ENCODE measurements at regions of chr6 and their contacts with region 1.

Region 1: DNA sequence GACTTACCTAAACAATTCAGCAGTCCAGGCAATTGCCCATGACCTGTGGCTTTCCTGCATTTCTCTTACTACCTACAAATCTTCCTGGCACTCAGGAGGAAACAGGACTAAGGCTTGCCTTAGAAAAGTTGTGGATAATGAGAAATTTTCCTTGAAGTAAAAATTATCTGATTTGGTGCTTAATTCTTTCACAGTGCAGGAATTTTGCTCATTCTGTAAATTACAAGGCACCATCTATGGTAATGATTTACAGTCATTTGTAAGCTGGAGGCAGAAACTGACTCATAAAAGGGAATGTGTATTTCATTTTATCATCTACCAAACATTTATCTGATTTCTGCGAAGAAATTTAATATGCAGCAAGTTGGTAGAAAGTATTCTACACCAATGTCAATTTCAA is 211.5 kb upstream of the FKBP1C start:
- DNase-seq: no peak
- ATAC-seq: no peak
- H3K4me3 ChIP-seq: no peak overlapping the region
- H3K27ac ChIP-seq: no peak overlapping the region
- H3K4me1 ChIP-seq: peaks cover 18% of the 10 kb centered on the region
- H3K27me3 ChIP-seq: no peaks in the 10 kb centered on the region
- CTCF ChIP-seq: no peak
- EP300 ChIP-seq: no peak
- POLR2A ChIP-seq: no peak
- RAD21 ChIP-seq: no peak

Region 2: GRCh38 chr6:64293298-64293697 is 1293.5 kb after region 1 on chr6:
- CTCF ChIA-PET with region 1: no interaction called
- POLR2A ChIA-PET with region 1: no interaction called
- in situ Hi-C with region 1: no loop called
- intact Hi-C with region 1: loop called (anchors 5 kb)
- DNase-seq: no peak
- ATAC-seq: no peak
- H3K4me3 ChIP-seq: no peak overlapping the region
- H3K27ac ChIP-seq: no peak overlapping the region
- H3K4me1 ChIP-seq: no peaks in the 10 kb centered on the region
- H3K27me3 ChIP-seq: no peaks in the 10 kb centered on the region
- CTCF ChIP-seq: no peak
- EP300 ChIP-seq: no peak
- POLR2A ChIP-seq: no peak
- RAD21 ChIP-seq: no peak